CD4-positive, alpha-beta memory T cell (primary cell): ENCODE measurements at regions of chr11 and their contacts with region 1.

Region 1: GRCh38 chr11:119084663-119085436 is at the start of gene HMBS:
- DNase-seq: peak; percentile 88 to 93 (median 89)
- H3K4me3 ChIP-seq: peak within 1 kb of the TSS; percentile 83 to 90
- H3K4me3 Mint-ChIP-seq: peak within 1 kb of the TSS; percentile 92 to 96 (median 94)
- H3K27ac ChIP-seq: peak within 1 kb of the TSS; percentile 76
- H3K27ac Mint-ChIP-seq: peak within 1 kb of the TSS; percentile 93 to 98 (median 96)
- H3K4me1 ChIP-seq: peaks cover 13% of the 10 kb centered on the region
- H3K4me1 Mint-ChIP-seq: peaks cover 9 to 19% (median 14%) of the 10 kb centered on the region in 4 donors
- H3K27me3 ChIP-seq: no peaks in the 10 kb centered on the region
- H3K27me3 Mint-ChIP-seq: no peaks in the 10 kb centered on the region
- total RNA-seq, gene HMBS: 5.1 to 5.8 TPM

Region 2: DNA sequence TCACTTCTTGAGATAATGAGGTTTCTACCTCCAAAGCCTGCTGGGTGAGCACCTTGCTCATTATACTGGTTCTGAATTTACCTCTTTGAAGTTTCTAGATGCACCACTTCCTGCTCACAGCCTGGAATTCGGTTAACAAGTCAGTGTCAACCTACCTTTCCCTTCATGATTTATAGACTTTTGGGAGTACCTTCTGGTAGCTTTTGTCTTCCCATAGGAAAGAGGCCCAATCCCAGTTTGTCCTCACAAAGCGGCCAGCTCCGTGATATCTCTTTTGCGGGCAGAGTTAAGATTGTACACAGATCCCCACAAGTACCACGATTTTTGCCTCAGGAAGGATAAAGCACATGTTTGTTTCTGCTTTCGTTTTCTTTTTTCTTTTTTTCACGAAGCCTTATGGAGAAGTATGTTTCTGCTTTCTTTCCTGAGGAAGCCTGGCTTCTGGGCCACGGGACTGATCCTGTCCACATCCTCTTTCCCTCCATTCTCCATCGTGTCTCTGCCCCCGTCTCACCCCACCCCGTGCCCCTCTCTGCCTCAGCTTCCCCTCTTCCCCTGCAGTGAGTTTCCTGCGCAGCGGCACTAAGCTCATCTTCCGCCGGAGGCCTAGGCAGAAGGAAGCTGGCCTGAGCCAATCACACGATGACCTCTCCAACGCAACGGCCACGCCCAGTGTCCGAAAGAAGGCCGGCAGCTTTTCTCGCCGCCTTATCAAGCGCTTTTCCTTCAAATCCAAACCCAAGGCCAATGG is 30.8 kb after region 1 on chr11:
- CTCF ChIA-PET with region 1: interaction called, 3 read pairs
- POLR2A ChIA-PET with region 1: interaction called, 11 read pairs
- intact Hi-C with region 1: no loop called
- DNase-seq: peak; percentile 56 to 65 (median 58)
- H3K4me3 ChIP-seq: peak overlapping the region in 1 of 2 donors; percentile 38
- H3K4me3 Mint-ChIP-seq: peak overlapping the region; percentile 75 to 87 (median 86)
- H3K27ac ChIP-seq: peak overlapping the region; percentile 63
- H3K27ac Mint-ChIP-seq: peak overlapping the region; percentile 83 to 97 (median 97)
- H3K4me1 ChIP-seq: peaks cover 37% of the 10 kb centered on the region
- H3K4me1 Mint-ChIP-seq: peaks cover 17 to 51% (median 30%) of the 10 kb centered on the region in 4 donors
- H3K27me3 ChIP-seq: no peaks in the 10 kb centered on the region
- H3K27me3 Mint-ChIP-seq: no peaks in the 10 kb centered on the region